ENCODE measurements at regions of chr3 and their contacts with region 1.

Region 1: GRCh38 chr3:169744366-169745054 is 20.4 kb downstream of the TERC start:
- DNase-seq: no peak
- ATAC-seq: no peak

Region 2: DNA sequence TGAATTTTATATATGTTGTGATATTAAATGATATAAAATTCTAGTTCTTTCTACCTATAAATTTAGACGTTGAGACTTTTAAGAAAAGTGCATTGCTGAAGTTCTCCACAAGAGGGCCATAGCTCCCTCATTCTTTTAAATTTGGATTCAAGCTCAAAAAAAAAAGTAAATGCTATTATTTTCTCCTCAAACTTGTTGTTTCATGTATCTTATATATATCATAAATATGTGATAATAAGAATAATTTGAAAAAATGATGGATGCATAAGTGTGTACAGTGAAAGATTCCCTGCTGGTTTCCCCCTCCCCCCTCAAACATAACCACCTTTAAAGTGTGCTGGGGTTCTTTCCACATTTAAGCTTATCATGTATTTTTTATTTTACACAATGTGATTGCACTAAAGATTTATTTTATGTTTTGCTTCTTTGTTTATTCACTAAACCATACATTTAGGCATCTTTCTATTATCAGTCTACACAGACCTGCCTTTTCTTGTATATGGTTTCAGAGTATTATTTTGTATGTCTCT is 879.4 kb before region 1 on chr3:
- intact Hi-C with region 1: loop called (anchors 10 kb)
- DNase-seq: no peak
- ATAC-seq: no peak

Region 3: DNA sequence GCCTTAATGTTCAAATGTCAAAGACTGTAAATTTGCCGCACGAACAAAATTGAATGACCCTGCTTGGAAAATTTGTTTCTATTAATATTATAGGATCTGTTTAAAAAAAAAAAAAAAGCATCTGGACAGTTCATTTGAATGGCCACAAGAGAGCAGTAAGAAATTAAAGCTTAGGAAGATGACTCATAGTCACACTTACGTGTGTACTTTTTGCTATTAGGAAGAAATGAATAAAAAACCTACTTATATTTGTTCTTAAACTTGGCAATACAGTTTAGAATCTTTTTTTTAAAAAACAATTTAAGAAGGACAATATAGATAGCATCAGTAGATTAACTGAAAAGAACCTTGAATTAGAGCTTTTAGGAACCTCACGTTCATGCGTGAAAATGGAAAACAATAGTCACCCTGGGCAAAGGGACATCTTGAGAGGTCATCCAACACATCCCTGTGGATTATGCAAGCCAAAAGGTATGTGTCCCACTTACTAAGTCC is 702.8 kb before region 1 on chr3:
- intact Hi-C with region 1: loop called (anchors 5 kb)
- DNase-seq: no peak
- ATAC-seq: no peak

Region 4: GRCh38 chr3:169668957-169669681 is 75.4 kb before region 1 on chr3:
- intact Hi-C with region 1: loop called (anchors 2 kb)
- DNase-seq: peak; percentile 89
- ATAC-seq: peak; percentile 97